Dendritic cell treated with granulocyte-macrophage colony-stimulating factor and Interleukin-4, amounts not matched to agents 40 ng/mL and 50 ng/mL, for 4 days (primary cell): ENCODE measurements at regions of chr12 and their contacts with region 1.

Region 1: DNA sequence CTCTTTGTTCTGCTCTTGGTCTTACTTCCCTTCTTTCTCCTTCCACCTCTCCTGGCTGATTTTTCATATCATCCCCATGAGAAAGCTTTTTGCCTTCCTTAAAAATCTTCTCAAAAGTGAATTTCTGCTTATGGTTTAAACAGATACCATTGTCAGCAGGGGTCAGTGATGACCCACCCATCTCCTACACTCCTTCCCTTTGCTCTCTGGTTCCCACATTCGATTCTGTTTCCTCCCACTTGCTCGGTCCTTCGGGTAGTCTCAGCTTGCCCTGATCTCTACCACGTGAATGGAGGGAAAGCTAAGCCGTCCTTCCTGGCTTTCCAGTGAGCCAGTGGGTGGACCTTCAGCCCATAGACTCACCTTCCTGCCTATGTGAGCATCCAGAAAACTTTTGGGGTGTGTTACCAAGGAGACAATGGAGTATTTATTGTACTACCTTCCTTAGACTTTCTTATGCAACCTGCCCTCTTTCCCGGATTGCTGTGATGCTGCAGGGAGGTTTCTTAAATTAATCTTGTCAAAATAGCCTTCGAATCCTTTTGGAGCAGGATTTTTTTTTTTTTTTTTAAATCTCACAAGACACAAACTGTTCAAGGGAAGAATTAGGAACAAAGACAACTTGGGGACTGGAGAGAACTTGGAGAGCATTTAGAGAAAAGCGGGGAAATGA is 306.3 kb downstream of the CACNA1C start:
- H3K4me3 Mint-ChIP-seq: no peak overlapping the region
- H3K27ac Mint-ChIP-seq: peak overlapping the region; percentile 28
- H3K4me1 Mint-ChIP-seq: peaks cover 48% of the 10 kb centered on the region
- H3K27me3 Mint-ChIP-seq: peaks cover 10% of the 10 kb centered on the region

Region 2: GRCh38 chr12:2561367-2561766 is 202.2 kb after region 1 on chr12:
- intact Hi-C with region 1: no loop called
- H3K4me3 Mint-ChIP-seq: no peak overlapping the region
- H3K27ac Mint-ChIP-seq: no peak overlapping the region
- H3K4me1 Mint-ChIP-seq: peaks cover 9% of the 10 kb centered on the region
- H3K27me3 Mint-ChIP-seq: peaks cover 5% of the 10 kb centered on the region

Region 3: GRCh38 chr12:2583091-2583497 is 224.0 kb after region 1 on chr12:
- intact Hi-C with region 1: loop called (anchors 1 kb)
- H3K4me3 Mint-ChIP-seq: no peak overlapping the region
- H3K27ac Mint-ChIP-seq: no peak overlapping the region
- H3K4me1 Mint-ChIP-seq: no peaks in the 10 kb centered on the region
- H3K27me3 Mint-ChIP-seq: peaks cover 43% of the 10 kb centered on the region